Spleen (tissue), 13 donors: ENCODE measurements at regions of chr18 and their contacts with region 1.

Region 1: GRCh38 chr18:49630246-49630699 is 68.4 kb downstream of the LIPG start:
- DNase-seq: no peak
- H3K4me3 ChIP-seq: no peak overlapping the region
- H3K27ac ChIP-seq: no peak overlapping the region
- H3K4me1 ChIP-seq: no peaks in the 10 kb centered on the region
- H3K27me3 ChIP-seq: peaks cover 0 to 60% (median 5%) of the 10 kb centered on the region in 7 donors
- CTCF ChIP-seq: no peak
- POLR2A ChIP-seq: no peak

Region 2: DNA sequence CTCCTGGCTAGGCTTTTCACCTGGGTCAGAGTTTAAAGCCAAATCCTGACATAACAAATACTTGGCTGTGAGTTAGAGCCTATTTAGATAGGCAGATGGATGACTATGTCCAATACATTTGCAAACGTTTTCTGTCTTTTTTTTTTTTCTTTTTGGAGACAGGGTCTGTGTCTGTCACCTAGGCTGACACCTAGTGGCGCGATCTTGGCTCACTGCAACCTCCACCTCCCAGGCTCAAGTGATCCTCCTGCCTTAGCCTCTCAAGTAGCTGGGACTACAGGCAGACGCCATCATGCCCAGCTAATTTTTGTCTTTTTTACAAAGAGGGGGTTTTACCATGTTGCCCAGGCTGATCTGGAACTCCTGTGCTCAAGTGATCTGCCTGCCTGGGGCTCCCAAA is 294.6 kb before region 1 on chr18:
- intact Hi-C with region 1: no loop called
- DNase-seq: no peak
- H3K4me3 ChIP-seq: no peak overlapping the region
- H3K27ac ChIP-seq: no peak overlapping the region
- H3K4me1 ChIP-seq: peaks cover 0 to 10% (median 0%) of the 10 kb centered on the region in 6 donors
- H3K27me3 ChIP-seq: no peaks in the 10 kb centered on the region
- CTCF ChIP-seq: peak in 2 of 11 experiments; percentile 12 to 14
- POLR2A ChIP-seq: no peak

Region 3: DNA sequence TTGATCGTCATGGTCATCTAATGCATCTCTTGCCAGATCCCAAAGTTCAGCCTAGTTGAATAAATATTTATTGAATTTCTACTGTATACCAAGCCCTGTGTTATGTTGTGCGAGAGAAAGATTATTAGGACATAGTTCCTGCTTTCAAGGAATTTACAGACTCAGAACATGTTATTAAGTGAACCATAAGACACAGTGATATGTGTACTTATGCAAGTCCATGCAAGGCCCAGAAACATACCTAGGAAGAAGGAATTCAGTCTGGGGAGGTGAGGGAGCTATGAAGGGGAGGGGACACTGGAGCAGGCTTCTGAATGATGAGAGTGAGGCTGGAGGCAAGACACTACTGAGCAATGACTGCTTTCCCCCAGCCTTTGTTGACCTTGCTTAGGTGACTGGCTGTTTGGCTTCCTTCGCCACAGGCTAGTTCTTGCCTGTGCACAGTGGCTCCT is 101.6 kb after region 1 on chr18:
- intact Hi-C with region 1: loop called (anchors 10 kb)
- DNase-seq: no peak
- H3K4me3 ChIP-seq: no peak overlapping the region
- H3K27ac ChIP-seq: no peak overlapping the region
- H3K4me1 ChIP-seq: no peaks in the 10 kb centered on the region
- H3K27me3 ChIP-seq: peaks cover 0 to 25% (median 0%) of the 10 kb centered on the region in 7 donors
- CTCF ChIP-seq: no peak
- POLR2A ChIP-seq: no peak

Region 4: GRCh38 chr18:49907346-49907929 is 277.2 kb after region 1 on chr18:
- intact Hi-C with region 1: no loop called
- DNase-seq: no peak
- H3K4me3 ChIP-seq: no peak overlapping the region
- H3K27ac ChIP-seq: no peak overlapping the region
- H3K4me1 ChIP-seq: no peaks in the 10 kb centered on the region
- H3K27me3 ChIP-seq: no peaks in the 10 kb centered on the region
- CTCF ChIP-seq: no peak
- POLR2A ChIP-seq: no peak